Panc1 (cell line): ENCODE measurements at regions of chr16 and their contacts with region 1.

Region 1: GRCh38 chr16:11964761-11965551 is at the start of gene TNFRSF17:
- DNase-seq: no peak
- ATAC-seq: no peak
- H3K4me3 ChIP-seq: no peak within 1 kb of the TSS
- H3K27ac ChIP-seq: no peak within 1 kb of the TSS
- H3K4me1 ChIP-seq: no peaks in the 10 kb centered on the region
- H3K27me3 ChIP-seq: no peaks in the 10 kb centered on the region
- CTCF ChIP-seq: no peak
- total RNA-seq, gene TNFRSF17: not detected

Region 2: GRCh38 chr16:10356870-10357842 is 1607.8 kb before region 1 on chr16:
- CTCF ChIA-PET with region 1: no interaction called
- POLR2A ChIA-PET with region 1: interaction called, 12 read pairs
- in situ Hi-C with region 1: no loop called
- intact Hi-C with region 1: no loop called
- DNase-seq: no peak
- ATAC-seq: no peak
- H3K4me3 ChIP-seq: no peak overlapping the region
- H3K27ac ChIP-seq: no peak overlapping the region
- H3K4me1 ChIP-seq: no peaks in the 10 kb centered on the region
- H3K27me3 ChIP-seq: no peaks in the 10 kb centered on the region
- CTCF ChIP-seq: no peak